ENCODE measurements at regions of chr2 and their contacts with region 1.

Region 1: GRCh38 chr2:239966029-239966852 is 58.9 kb downstream of the NDUFA10 start:
- DNase-seq: no peak
- H3K4me3 ChIP-seq: no peak overlapping the region
- H3K27ac ChIP-seq: no peak overlapping the region
- H3K4me1 ChIP-seq: no peaks in the 10 kb centered on the region
- H3K27me3 ChIP-seq: no peaks in the 10 kb centered on the region
- CTCF ChIP-seq: no peak

Region 2: GRCh38 chr2:239997686-239998405 is 31.6 kb after region 1 on chr2:
- CTCF ChIA-PET with region 1: no interaction called
- POLR2A ChIA-PET with region 1: interaction called, 14 read pairs
- intact Hi-C with region 1: no loop called
- DNase-seq: no peak
- H3K4me3 ChIP-seq: no peak overlapping the region
- H3K27ac ChIP-seq: no peak overlapping the region
- H3K4me1 ChIP-seq: no peaks in the 10 kb centered on the region
- H3K27me3 ChIP-seq: no peaks in the 10 kb centered on the region
- CTCF ChIP-seq: no peak

Region 3: GRCh38 chr2:240624950-240625621 is 658.8 kb after region 1 on chr2 and contains the start of gene GPR35:
- CTCF ChIA-PET with region 1: no interaction called
- POLR2A ChIA-PET with region 1: no interaction called
- intact Hi-C with region 1: no loop called
- DNase-seq: no peak
- H3K4me3 ChIP-seq: no peak within 1 kb of the TSS
- H3K27ac ChIP-seq: no peak within 1 kb of the TSS
- H3K4me1 ChIP-seq: no peaks in the 10 kb centered on the region
- H3K27me3 ChIP-seq: no peaks in the 10 kb centered on the region
- CTCF ChIP-seq: no peak
- total RNA-seq, gene GPR35: 2.7 and 2.9 TPM in 2 replicates